ENCODE measurements at regions of chr10 and their contacts with region 1.

Region 1: GRCh38 chr10:115829521-115830205 is 443.3 kb downstream of the GFRA1 start:
- ATAC-seq: peak; percentile 38 to 71 (median 60)
- H3K4me3 ChIP-seq: no peak overlapping the region
- H3K27ac ChIP-seq: no peak overlapping the region
- H3K4me1 ChIP-seq: no peaks in the 10 kb centered on the region

Region 2: GRCh38 chr10:116014871-116015582 is 185.4 kb after region 1 on chr10:
- in situ Hi-C with region 1: no loop called
- ATAC-seq: peak in 6 of 8 experiments; percentile 49 to 69 (median 58)
- H3K4me3 ChIP-seq: no peak overlapping the region
- H3K27ac ChIP-seq: no peak overlapping the region
- H3K4me1 ChIP-seq: peaks cover 10 to 14% of the 10 kb centered on the region in 2 donors

Region 3: GRCh38 chr10:116272440-116273283 is 443.0 kb after region 1 on chr10 and contains the start of gene GFRA1:
- in situ Hi-C with region 1: loop called in 2 of 9 experiments (anchors 25 kb)
- ATAC-seq: peak; percentile 15 to 47 (median 26)
- H3K4me3 ChIP-seq: peak within 1 kb of the TSS; percentile 51 to 93 (median 60)
- H3K27ac ChIP-seq: peak within 1 kb of the TSS; percentile 70 to 75
- H3K4me1 ChIP-seq: peaks cover 10 to 41% of the 10 kb centered on the region in 2 donors
- total RNA-seq, gene GFRA1: 0.77 to 136 (median 50.2) TPM

Region 4: DNA sequence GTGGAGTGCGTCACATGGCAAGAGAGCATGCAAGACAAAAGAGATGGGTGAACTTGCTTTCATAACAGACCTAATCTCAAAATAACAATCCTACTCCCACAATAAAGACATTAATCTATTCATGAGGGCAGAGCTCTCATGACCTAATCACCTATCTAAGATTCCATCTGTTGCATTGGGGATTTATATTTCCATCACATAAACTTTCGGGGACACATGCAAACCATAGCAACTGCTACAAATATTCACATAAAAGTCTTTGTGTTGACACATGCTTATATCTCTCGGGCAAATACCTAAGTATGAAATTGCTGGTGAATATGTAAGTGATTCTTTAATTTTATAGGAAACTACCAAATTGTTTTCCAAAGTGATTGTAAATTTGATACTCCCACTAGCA is 745.1 kb after region 1 on chr10:
- in situ Hi-C with region 1: no loop called
- ATAC-seq: peak in 3 of 8 experiments; percentile 36 to 80 (median 53)
- H3K4me3 ChIP-seq: no peak overlapping the region
- H3K27ac ChIP-seq: no peak overlapping the region
- H3K4me1 ChIP-seq: no peaks in the 10 kb centered on the region

Measured in motor neuron (in vitro differentiated cells).